ENCODE measurements at regions of chr6 and their contacts with region 1.

Region 1: DNA sequence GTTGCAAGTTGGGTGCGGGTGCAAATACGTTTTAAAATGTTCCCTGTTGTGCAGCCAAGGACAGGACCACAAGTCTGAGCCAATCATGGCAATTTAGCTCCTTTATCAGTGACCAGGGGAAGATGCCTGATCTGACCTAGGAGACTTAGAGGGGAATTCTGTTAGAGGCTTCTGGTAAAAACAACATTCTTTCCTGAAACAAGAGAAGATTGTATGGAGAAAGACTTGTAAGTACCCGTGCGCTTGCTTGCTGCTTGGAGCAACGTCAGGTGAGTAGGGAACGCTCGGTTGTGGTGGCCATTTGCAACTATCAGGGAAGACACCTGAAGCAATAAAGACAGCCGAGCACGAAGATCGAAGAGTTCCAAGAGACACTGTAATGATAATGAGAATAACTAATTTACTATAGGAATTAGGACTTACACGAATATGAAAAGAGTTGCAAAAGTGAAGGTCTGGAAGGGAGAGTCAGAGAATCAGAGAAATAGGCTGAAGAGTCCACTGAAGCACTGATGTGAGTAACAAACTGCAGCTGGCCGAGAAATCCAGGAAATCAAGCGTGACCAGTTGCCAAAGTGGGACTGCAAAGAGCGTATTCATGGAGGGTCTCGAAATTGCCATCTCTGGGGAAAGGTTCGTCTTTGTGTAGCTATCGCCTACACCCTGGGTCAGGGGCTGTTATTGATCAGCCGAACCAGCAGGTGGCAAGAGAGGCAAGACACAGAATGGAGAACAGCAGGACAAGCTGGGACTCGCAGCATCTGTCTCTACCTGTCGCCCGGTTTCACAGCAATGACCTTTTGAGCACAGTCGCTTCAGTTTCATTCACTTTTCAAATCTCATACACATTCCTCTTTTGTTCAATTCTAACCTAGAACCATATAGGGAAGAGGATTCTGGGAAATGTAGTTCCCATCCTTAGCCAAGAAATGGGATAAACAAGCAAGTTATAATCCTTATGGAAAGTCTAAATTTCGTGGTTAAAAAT is 26.1 kb downstream of the LOC128125822 start:
- DNase-seq: peak; percentile 54 to 83 (median 72)
- H3K4me3 ChIP-seq: peak overlapping the region; percentile 62
- H3K4me3 Mint-ChIP-seq: peak overlapping the region; percentile 53 to 87 (median 84)
- H3K27ac ChIP-seq: no peak overlapping the region
- H3K27ac Mint-ChIP-seq: peak overlapping the region in 4 of 8 donors; percentile 1 to 73 (median 20)
- H3K4me1 ChIP-seq: peaks cover 3% of the 10 kb centered on the region
- H3K4me1 Mint-ChIP-seq: peaks cover 11 to 15% (median 14%) of the 10 kb centered on the region in 3 donors
- H3K27me3 ChIP-seq: no peaks in the 10 kb centered on the region
- H3K27me3 Mint-ChIP-seq: peaks cover 1 to 21% of the 10 kb centered on the region in 2 donors

Region 2: DNA sequence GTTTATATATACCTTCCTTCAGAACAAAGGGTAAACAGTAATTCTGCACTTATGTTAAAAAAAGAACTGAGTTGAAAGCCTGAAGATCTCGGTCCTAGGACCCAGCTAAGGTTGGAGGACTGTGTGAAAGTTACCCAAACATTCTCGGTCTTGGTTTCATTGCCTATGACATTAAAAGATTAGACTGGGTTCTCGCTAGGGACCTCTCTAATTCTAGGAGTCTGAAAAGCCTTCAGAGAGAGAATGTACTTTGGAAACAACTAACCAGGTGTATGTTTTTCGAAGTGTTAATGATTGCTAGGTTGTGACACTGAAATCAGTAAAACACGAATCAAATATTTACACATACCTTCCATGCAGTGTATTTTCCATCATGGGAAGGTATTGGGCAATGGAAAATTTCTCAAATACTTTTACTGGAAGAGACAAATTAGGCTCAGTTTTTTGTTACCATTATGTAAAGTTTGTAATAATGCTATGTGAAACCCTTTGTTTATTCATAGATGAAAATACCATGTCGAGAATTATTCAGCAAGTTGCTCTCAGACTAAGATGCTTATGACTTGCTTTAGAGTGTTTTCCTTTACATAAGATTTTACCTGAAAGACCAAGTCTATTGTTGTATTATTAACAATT is 139.7 kb before region 1 on chr6:
- CTCF ChIA-PET with region 1: no interaction called
- POLR2A ChIA-PET with region 1: no interaction called
- DNase-seq: no peak
- H3K4me3 ChIP-seq: no peak overlapping the region
- H3K4me3 Mint-ChIP-seq: no peak overlapping the region
- H3K27ac ChIP-seq: no peak overlapping the region
- H3K27ac Mint-ChIP-seq: no peak overlapping the region
- H3K4me1 ChIP-seq: no peaks in the 10 kb centered on the region
- H3K4me1 Mint-ChIP-seq: no peaks in the 10 kb centered on the region
- H3K27me3 ChIP-seq: no peaks in the 10 kb centered on the region
- H3K27me3 Mint-ChIP-seq: peaks cover 0 to 8% of the 10 kb centered on the region in 2 donors

Region 3: GRCh38 chr6:63487138-63487813 is 111.1 kb before region 1 on chr6:
- CTCF ChIA-PET with region 1: no interaction called
- POLR2A ChIA-PET with region 1: no interaction called
- DNase-seq: no peak
- H3K4me3 ChIP-seq: no peak overlapping the region
- H3K4me3 Mint-ChIP-seq: no peak overlapping the region
- H3K27ac ChIP-seq: no peak overlapping the region
- H3K27ac Mint-ChIP-seq: no peak overlapping the region
- H3K4me1 ChIP-seq: no peaks in the 10 kb centered on the region
- H3K4me1 Mint-ChIP-seq: no peaks in the 10 kb centered on the region
- H3K27me3 ChIP-seq: no peaks in the 10 kb centered on the region
- H3K27me3 Mint-ChIP-seq: peaks cover 2 to 18% of the 10 kb centered on the region in 2 donors

Region 4: GRCh38 chr6:63573140-63573898 is 25.0 kb before region 1 on chr6:
- CTCF ChIA-PET with region 1: interaction called, 11 read pairs
- POLR2A ChIA-PET with region 1: interaction called, 7 read pairs
- DNase-seq: peak; percentile 55 to 81 (median 73)
- H3K4me3 ChIP-seq: peak overlapping the region; percentile 91
- H3K4me3 Mint-ChIP-seq: peak overlapping the region; percentile 89 to 100 (median 93)
- H3K27ac ChIP-seq: peak overlapping the region; percentile 87
- H3K27ac Mint-ChIP-seq: peak overlapping the region; percentile 90 to 100 (median 98)
- H3K4me1 ChIP-seq: peaks cover 25% of the 10 kb centered on the region
- H3K4me1 Mint-ChIP-seq: peaks cover 31 to 46% (median 43%) of the 10 kb centered on the region in 3 donors
- H3K27me3 ChIP-seq: no peaks in the 10 kb centered on the region
- H3K27me3 Mint-ChIP-seq: peaks cover 0 to 4% of the 10 kb centered on the region in 2 donors

Region 5: GRCh38 chr6:63609231-63609630 is 10.9 kb after region 1 on chr6:
- CTCF ChIA-PET with region 1: interaction called, 23 read pairs
- POLR2A ChIA-PET with region 1: no interaction called
- DNase-seq: no peak
- H3K4me3 ChIP-seq: no peak overlapping the region
- H3K4me3 Mint-ChIP-seq: no peak overlapping the region
- H3K27ac ChIP-seq: no peak overlapping the region
- H3K27ac Mint-ChIP-seq: no peak overlapping the region
- H3K4me1 ChIP-seq: no peaks in the 10 kb centered on the region
- H3K4me1 Mint-ChIP-seq: no peaks in the 10 kb centered on the region
- H3K27me3 ChIP-seq: no peaks in the 10 kb centered on the region
- H3K27me3 Mint-ChIP-seq: peaks cover 3 to 12% of the 10 kb centered on the region in 2 donors

Region 6: DNA sequence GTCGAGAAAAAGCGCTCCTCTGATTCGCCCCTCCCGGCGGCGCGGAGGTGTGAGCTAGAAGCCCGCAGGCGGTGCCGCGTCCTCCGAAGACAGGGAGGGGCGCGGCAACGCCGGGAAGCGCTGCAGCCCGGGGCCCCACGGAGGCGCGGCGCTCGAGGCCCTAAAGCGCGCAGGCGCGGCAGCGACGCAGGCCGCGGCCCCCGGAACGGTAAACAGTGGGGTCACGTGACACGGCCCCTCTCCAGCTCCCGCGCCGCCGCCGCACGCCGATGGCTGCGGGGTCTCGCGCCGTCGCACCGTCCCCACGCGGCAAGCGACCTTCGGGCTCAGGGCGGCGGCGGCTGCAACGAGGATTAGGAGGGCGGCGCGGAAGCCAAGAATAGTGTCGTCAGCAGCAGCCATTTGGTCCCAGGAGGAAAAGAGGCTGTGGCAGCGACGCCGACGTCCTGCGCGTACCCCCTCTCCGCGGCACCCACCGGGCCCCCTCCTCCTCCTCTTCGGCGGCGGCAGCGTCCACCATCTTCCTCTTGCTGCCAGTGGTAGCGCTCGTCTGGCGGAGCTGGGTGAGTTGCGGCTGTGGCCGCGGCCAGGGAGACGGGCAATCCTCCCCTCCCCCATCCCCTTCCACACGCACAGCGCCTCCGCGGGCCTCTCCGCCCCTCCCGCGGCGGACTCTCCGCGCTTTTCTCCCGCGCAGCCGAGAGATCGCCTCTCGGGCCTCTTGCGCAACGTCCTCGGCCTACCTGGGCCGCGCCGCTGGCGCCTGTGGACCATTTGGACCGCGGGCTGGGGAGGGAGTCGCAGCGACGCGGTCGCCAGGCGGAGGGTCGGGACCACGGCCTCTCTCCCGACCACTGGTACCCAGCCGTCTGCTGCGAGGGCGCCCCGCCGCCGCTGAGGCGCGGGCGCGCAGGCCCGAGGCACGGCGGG is 37.5 kb after region 1 on chr6 and contains the start of gene PHF3:
- CTCF ChIA-PET with region 1: interaction called, 18 read pairs
- POLR2A ChIA-PET with region 1: interaction called, 12 read pairs
- DNase-seq: peak; percentile 87 to 94 (median 93)
- H3K4me3 ChIP-seq: peak within 1 kb of the TSS; percentile 88
- H3K4me3 Mint-ChIP-seq: peak within 1 kb of the TSS; percentile 94 to 100 (median 99)
- H3K27ac ChIP-seq: peak within 1 kb of the TSS; percentile 93
- H3K27ac Mint-ChIP-seq: peak within 1 kb of the TSS; percentile 96 to 100 (median 99)
- H3K4me1 ChIP-seq: peaks cover 46% of the 10 kb centered on the region
- H3K4me1 Mint-ChIP-seq: peaks cover 48 to 54% (median 54%) of the 10 kb centered on the region in 3 donors
- H3K27me3 ChIP-seq: no peaks in the 10 kb centered on the region
- H3K27me3 Mint-ChIP-seq: peaks cover 0 to 4% of the 10 kb centered on the region in 2 donors
- total RNA-seq, gene PHF3: 44.1 to 44.3 TPM

Region 7: GRCh38 chr6:63764318-63764916 is 166.1 kb after region 1 on chr6:
- CTCF ChIA-PET with region 1: interaction called, 117 read pairs
- POLR2A ChIA-PET with region 1: interaction called, 3 read pairs
- DNase-seq: peak in 2 of 5 donors; percentile 27 to 41
- H3K4me3 ChIP-seq: no peak overlapping the region
- H3K4me3 Mint-ChIP-seq: no peak overlapping the region
- H3K27ac ChIP-seq: no peak overlapping the region
- H3K27ac Mint-ChIP-seq: no peak overlapping the region
- H3K4me1 ChIP-seq: no peaks in the 10 kb centered on the region
- H3K4me1 Mint-ChIP-seq: no peaks in the 10 kb centered on the region
- H3K27me3 ChIP-seq: no peaks in the 10 kb centered on the region
- H3K27me3 Mint-ChIP-seq: peaks cover 9 to 16% of the 10 kb centered on the region in 2 donors